PC-3 (cell line): ENCODE measurements at regions of chr4 and their contacts with region 1.

Region 1: DNA sequence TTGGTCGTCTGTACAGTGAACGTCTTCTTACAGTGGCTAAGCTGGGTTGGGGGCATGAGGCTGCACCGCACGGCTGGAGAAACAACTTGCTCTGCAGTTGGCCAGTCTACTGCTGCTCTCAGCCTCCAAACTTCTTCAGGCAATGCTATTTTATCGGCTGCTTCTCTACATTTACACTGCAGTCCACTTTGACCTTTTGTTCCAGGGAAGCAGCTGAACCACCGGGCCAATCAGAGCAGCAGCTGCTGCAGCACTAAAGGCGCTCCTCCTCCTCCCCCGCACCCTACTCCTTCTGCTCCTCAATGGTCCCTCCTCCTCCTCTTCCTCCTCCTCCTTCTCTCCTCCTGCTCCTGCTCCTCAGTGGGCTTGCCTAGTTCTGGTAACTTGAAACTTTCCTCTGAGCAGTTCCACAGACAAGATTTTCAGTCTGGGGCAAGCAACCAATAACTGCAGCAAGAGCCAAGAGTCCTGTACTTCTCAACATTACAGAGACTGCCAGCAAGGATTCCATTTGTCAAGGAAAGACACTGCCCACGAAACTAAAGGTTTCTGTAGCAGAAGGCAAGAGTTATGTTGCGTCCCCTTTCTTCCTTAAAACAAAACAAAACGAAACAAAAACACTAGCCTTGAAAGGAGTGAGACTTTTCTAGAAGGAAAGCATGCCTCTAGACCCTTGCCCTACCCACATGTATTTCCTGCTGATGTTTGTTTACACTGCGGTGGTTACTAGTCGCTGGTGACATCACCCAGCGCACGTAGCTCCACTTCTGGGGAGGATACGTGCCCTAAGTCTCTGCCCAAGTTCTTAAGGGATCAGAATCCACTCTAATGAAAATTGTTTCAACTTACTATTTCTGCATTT is 125.7 kb upstream of the NAP1L5 start:
- DNase-seq: peak; percentile 87
- ATAC-seq: peak; percentile 83
- H3K4me3 ChIP-seq: peak overlapping the region; percentile 72
- H3K27ac ChIP-seq: peak overlapping the region; percentile 97
- H3K4me1 ChIP-seq: peaks cover 40% of the 10 kb centered on the region
- H3K27me3 ChIP-seq: no peaks in the 10 kb centered on the region
- CTCF ChIP-seq: no peak

Region 2: DNA sequence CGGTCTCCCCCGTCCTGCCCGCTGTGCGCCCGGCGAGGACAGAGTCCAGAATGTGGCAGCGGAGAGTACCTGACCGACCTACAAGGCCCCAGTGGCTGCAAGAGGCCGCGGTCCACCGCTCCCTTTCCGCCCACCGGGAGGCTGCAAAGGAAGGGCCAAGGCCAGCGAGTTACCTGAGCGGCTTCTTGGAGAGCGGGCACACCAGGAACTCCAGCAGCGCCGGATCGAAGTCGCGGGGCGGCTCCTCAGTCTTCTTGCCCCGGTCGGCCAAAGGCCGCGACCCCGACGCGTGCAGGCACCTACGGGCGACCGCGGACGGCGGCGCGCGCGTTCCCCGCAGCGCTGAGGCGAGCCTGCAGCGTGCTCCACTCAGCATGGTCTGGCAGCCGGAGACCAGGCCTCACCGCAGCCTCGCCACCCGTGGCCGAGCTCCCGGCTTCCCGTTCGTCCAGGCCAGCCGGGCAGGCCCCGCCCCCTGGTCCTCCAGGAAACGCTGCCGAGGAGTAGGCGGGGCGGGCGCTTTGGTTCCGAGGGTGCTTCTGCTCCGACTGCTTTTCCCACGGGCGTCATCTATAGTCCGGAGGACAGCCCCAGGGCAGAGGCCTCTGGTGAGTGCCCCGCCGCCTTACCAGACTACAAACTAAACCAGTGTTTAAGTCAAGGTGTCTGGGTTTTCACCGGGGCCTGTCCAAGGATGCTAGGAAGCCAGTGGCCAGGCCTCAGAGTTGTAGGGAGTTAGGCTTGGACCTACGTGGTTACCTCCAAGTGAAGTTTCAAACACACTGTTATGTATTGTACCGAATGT is 299.8 kb before region 1 on chr4 and contains the start of gene PYURF:
- CTCF ChIA-PET with region 1: no interaction called
- POLR2A ChIA-PET with region 1: no interaction called
- intact Hi-C with region 1: loop called (anchors 10 kb)
- DNase-seq: peak; percentile 87
- ATAC-seq: peak; percentile 93
- H3K4me3 ChIP-seq: peak within 1 kb of the TSS; percentile 99
- H3K27ac ChIP-seq: peak within 1 kb of the TSS; percentile 62
- H3K4me1 ChIP-seq: peaks cover 42% of the 10 kb centered on the region
- H3K27me3 ChIP-seq: no peaks in the 10 kb centered on the region
- CTCF ChIP-seq: no peak
- total RNA-seq, gene PYURF: 143 and 159 TPM in 2 replicates

Region 3: DNA sequence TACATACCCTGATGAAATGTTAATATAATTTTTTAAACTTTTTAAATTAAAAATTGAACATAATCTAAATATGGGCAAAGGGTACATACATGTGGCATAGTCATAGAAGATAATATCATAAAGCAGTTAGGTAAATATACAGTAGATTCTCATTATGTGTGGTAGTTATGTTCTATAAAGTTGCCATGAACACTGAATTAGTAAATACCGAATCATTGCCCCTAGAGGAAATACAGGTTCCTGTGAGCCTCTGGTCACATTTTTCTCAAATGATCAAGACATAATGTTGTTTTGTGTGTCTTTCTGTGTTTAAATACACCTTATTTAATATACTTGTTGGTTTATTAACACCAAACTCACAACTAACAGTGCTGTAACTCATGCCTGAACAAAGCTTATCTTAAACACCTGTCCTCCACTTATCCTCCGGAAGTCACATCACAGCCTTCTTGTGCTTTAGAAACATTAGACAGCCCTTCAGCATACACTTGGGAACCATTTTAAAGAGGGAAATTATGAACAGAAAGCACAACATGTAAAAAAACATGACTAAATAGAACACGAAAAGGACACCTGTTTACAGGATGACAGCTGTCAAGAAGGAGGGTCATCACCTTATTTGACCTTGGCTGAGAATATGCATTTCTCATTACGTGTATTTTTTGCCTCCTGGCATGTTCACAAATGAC is 43.7 kb after region 1 on chr4:
- CTCF ChIA-PET with region 1: no interaction called
- POLR2A ChIA-PET with region 1: interaction called, 3 read pairs
- intact Hi-C with region 1: loop called (anchors 1 kb)
- DNase-seq: peak; percentile 88
- ATAC-seq: peak; percentile 90
- H3K4me3 ChIP-seq: peak overlapping the region; percentile 0; the same call in 1 of the 2 replicates
- H3K27ac ChIP-seq: peak overlapping the region; percentile 90
- H3K4me1 ChIP-seq: peaks cover 44% of the 10 kb centered on the region
- H3K27me3 ChIP-seq: no peaks in the 10 kb centered on the region
- CTCF ChIP-seq: no peak

Region 4: GRCh38 chr4:88964450-88964849 is 141.2 kb after region 1 on chr4:
- CTCF ChIA-PET with region 1: no interaction called
- POLR2A ChIA-PET with region 1: no interaction called
- intact Hi-C with region 1: loop called (anchors 2 kb)
- DNase-seq: peak; percentile 55
- ATAC-seq: peak; percentile 68
- H3K4me3 ChIP-seq: no peak overlapping the region
- H3K27ac ChIP-seq: peak overlapping the region; percentile 90
- H3K4me1 ChIP-seq: peaks cover 49% of the 10 kb centered on the region
- H3K27me3 ChIP-seq: no peaks in the 10 kb centered on the region
- CTCF ChIP-seq: no peak

Region 5: GRCh38 chr4:89110986-89111832 is 287.9 kb after region 1 on chr4 and contains the start of gene TIGD2:
- CTCF ChIA-PET with region 1: no interaction called
- POLR2A ChIA-PET with region 1: no interaction called
- intact Hi-C with region 1: loop called (anchors 5 kb)
- DNase-seq: peak; percentile 82
- ATAC-seq: peak; percentile 90
- H3K4me3 ChIP-seq: peak within 1 kb of the TSS; percentile 86
- H3K27ac ChIP-seq: 0 out of 2 replicates have a peak within 1 kb of the TSS, but pooled peaks have one; percentile 11
- H3K4me1 ChIP-seq: peaks cover 16% of the 10 kb centered on the region
- H3K27me3 ChIP-seq: peaks cover 5% of the 10 kb centered on the region; the same call in 1 of the 2 replicates
- CTCF ChIP-seq: peak; percentile 62
- total RNA-seq, gene TIGD2: 4.2 and 5.4 TPM in 2 replicates